A549 (cell line): ENCODE measurements at regions of chr12 and their contacts with region 1.

Region 1: GRCh38 chr12:49130151-49131050 is 794 bp downstream of the TUBA1B start:
- DNase-seq: peak; percentile 84 to 96
- ATAC-seq: peak; percentile 74 to 80
- H3K4me3 ChIP-seq: peak overlapping the region; percentile 93
- H3K27ac ChIP-seq: peak overlapping the region; percentile 99
- H3K4me1 ChIP-seq: peaks cover 27% of the 10 kb centered on the region
- CTCF ChIP-seq: peak; percentile 90
- EP300 ChIP-seq: no peak
- POLR2A ChIP-seq: peak; percentile 44
- RAD21 ChIP-seq: peak; percentile 22 to 62

Region 2: DNA sequence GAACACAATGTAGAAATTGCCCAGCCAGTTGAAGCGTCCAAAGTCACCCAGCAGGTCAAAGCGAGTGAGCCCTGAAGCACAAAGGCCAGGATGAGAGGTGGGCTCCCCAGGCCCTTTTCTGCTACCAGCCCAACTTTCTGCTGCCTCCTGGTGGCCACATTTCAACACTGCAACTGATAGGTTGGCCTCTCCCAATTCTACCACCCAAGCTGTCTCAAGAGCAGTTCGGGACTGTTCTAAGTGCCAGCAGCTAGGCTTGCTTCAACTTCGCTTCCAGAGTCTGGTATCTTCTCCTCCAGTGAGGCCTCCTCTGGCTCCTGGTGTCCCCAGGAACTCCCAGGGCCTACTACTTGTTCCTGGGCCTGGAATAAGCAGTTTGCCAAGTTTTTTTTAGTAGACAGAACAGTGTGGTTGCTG is 32.4 kb before region 1 on chr12:
- CTCF ChIA-PET with region 1: interaction called, 115 read pairs
- POLR2A ChIA-PET with region 1: interaction called, 7 read pairs
- DNase-seq: peak; percentile 65 to 74
- ATAC-seq: peak; percentile 41 to 76; a peak in 4 of 6 replicates
- H3K4me3 ChIP-seq: no peak overlapping the region
- H3K27ac ChIP-seq: no peak overlapping the region
- H3K4me1 ChIP-seq: 0 out of 3 replicates have a peak, but pooled peaks cover 5% of the 10 kb centered on the region
- CTCF ChIP-seq: peak; percentile 69
- EP300 ChIP-seq: no peak
- POLR2A ChIP-seq: no peak
- RAD21 ChIP-seq: peak; percentile 36 to 49; a peak in 4 of 5 replicates

Region 3: GRCh38 chr12:49161092-49161795 is 30.8 kb after region 1 on chr12:
- CTCF ChIA-PET with region 1: interaction called, 5 read pairs
- POLR2A ChIA-PET with region 1: interaction called, 11 read pairs
- DNase-seq: no peak
- ATAC-seq: no peak
- H3K4me3 ChIP-seq: no peak overlapping the region
- H3K27ac ChIP-seq: no peak overlapping the region
- H3K4me1 ChIP-seq: no peaks in the 10 kb centered on the region
- CTCF ChIP-seq: no peak
- EP300 ChIP-seq: no peak
- POLR2A ChIP-seq: no peak
- RAD21 ChIP-seq: no peak

Region 4: DNA sequence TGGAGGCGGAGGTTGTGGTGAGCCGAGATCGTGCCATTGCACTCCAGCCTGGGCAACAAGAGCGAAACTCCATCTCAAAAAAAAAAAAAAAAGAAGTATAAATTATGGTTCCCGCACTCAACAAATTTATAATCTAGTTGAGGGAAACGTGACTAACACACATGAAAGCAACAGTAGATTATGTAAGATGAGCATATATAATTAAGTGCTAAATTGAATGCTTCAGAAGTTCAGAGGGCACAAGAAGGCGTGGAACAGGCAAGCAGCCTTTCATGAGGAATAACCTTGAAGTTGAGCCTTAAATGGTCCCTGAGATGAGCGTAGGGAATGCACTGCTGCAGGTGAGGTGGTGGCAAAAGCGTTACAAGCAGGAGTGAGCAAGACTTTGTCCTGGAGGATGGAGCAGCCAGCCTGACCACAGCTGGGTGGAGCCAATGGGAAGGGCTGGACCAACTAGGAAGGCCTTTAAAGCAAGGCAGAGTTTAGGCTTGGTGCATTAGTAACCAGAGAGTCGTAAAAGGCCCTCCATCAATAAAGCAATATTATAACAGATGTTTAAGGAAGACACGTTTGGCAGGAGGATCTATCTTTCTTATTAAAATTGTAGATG is 89.1 kb after region 1 on chr12:
- CTCF ChIA-PET with region 1: interaction called, 12 read pairs
- POLR2A ChIA-PET with region 1: interaction called, 10 read pairs
- DNase-seq: no peak
- ATAC-seq: peak in 1 of 2 experiments; percentile 30; a peak in 1 of 6 replicates
- H3K4me3 ChIP-seq: no peak overlapping the region
- H3K27ac ChIP-seq: no peak overlapping the region
- H3K4me1 ChIP-seq: peaks cover 10% of the 10 kb centered on the region
- CTCF ChIP-seq: no peak
- EP300 ChIP-seq: no peak
- POLR2A ChIP-seq: no peak
- RAD21 ChIP-seq: no peak

Region 5: GRCh38 chr12:49264738-49265515 is 134.5 kb after region 1 on chr12 and contains the start of gene TUBA1C:
- CTCF ChIA-PET with region 1: interaction called, 16 read pairs
- POLR2A ChIA-PET with region 1: interaction called, 38 read pairs
- DNase-seq: peak; percentile 91 to 97
- ATAC-seq: peak; percentile 80 to 83
- H3K4me3 ChIP-seq: peak within 1 kb of the TSS; percentile 71
- H3K27ac ChIP-seq: peak within 1 kb of the TSS; percentile 94 to 100
- H3K4me1 ChIP-seq: peaks cover 36% of the 10 kb centered on the region
- CTCF ChIP-seq: no peak
- EP300 ChIP-seq: no peak
- POLR2A ChIP-seq: peak; percentile 99
- RAD21 ChIP-seq: no peak
- polyA plus RNA-seq, gene TUBA1C: 1,183 and 1,488 TPM in 2 replicates